ENCODE measurements at regions of chr7 and their contacts with region 1.

Region 1: GRCh38 chr7:158829342-158830210 is at the start of gene ESYT2:
- DNase-seq: peak; percentile 99
- ATAC-seq: peak; percentile 78
- H3K4me3 Mint-ChIP-seq: peak within 1 kb of the TSS; percentile 94
- H3K27ac Mint-ChIP-seq: peak within 1 kb of the TSS; percentile 85
- H3K4me1 Mint-ChIP-seq: peaks cover 34% of the 10 kb centered on the region
- H3K27me3 Mint-ChIP-seq: no peaks in the 10 kb centered on the region
- total RNA-seq, gene ESYT2: 68.5 to 73.7 TPM

Region 2: DNA sequence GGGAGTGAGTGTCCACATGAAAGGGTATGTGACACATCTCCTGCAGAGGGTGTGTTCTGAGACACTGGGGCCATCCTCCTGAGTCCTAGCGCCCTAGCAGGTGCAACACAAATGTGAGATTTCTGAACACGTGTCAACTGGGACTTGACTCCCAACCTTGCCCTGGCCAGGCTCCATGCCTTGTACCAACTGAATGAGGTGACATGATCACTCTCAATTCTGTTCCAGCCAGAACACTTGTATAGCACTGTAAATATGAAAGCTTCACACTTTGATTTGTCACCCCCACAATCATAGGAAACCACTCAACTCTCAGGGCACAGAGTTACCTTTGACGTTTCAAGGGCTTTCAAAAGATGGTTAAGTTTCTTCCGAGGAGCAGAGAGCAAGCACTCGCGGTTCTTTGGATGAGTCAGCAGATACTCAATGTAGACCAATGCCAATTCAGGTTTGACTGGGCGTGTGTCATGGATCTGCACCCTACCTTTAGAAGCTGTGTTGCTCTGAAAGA is 173.6 kb before region 1 on chr7:
- CTCF ChIA-PET with region 1: no interaction called
- POLR2A ChIA-PET with region 1: no interaction called
- intact Hi-C with region 1: loop called (anchors 1 to 5 kb)
- DNase-seq: peak; percentile 87
- ATAC-seq: peak; percentile 93
- H3K4me3 Mint-ChIP-seq: no peak overlapping the region
- H3K27ac Mint-ChIP-seq: peak overlapping the region; percentile 83
- H3K4me1 Mint-ChIP-seq: peaks cover 31% of the 10 kb centered on the region
- H3K27me3 Mint-ChIP-seq: no peaks in the 10 kb centered on the region

Region 3: GRCh38 chr7:158782761-158783401 is 46.7 kb before region 1 on chr7:
- CTCF ChIA-PET with region 1: no interaction called
- POLR2A ChIA-PET with region 1: no interaction called
- intact Hi-C with region 1: loop called (anchors 2 to 5 kb)
- DNase-seq: peak; percentile 34
- ATAC-seq: peak; percentile 49
- H3K4me3 Mint-ChIP-seq: no peak overlapping the region
- H3K27ac Mint-ChIP-seq: no peak overlapping the region
- H3K4me1 Mint-ChIP-seq: peaks cover 4% of the 10 kb centered on the region
- H3K27me3 Mint-ChIP-seq: no peaks in the 10 kb centered on the region

Region 4: DNA sequence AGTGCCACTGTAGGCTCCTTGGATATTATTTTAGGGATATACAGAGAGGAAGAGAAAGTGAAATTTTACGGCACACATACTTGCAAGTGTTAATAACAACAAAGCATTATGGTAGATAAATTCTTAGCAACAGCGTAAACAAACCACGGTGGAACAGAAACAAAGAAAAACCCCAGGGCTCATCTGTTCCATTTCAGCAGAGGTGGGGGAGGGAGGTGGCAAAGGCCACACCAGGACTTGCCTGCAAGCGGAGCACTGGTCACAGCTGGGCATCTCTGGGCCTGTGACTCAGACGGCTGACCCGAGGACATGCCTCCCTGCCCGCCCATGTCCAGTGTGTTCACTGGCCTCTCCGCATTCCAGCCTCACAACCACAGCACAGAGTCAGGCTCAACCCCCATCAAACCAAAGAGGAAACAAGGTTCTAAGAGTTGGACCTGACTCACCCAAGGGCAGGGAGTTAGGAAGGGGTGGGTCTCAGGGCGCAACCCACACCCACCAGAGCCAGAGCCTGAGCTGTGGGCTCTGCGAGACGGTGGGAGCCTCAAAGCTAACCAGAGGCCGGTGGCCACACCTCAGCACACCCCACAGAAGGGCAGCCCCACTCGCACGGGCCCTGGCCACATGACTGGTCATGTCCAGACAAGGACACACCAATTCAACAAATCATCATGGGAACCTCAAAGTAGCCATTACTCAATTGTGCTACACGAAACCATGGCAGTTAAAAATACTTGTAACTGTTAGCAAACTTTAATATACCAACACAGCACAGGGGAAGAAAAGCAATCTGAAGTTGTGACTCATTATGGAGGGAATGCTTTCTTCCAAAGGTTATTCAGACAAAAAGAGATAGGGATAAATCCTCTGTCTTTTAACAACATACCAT is 11.0 kb before region 1 on chr7:
- CTCF ChIA-PET with region 1: interaction called, 6 read pairs
- POLR2A ChIA-PET with region 1: interaction called, 6 read pairs
- intact Hi-C with region 1: loop called (anchors 1 kb)
- DNase-seq: peak; percentile 85
- ATAC-seq: peak; percentile 74
- H3K4me3 Mint-ChIP-seq: peak overlapping the region; percentile 73
- H3K27ac Mint-ChIP-seq: peak overlapping the region; percentile 93
- H3K4me1 Mint-ChIP-seq: peaks cover 87% of the 10 kb centered on the region
- H3K27me3 Mint-ChIP-seq: no peaks in the 10 kb centered on the region

Region 5: GRCh38 chr7:158856883-158857668 is 27.5 kb after region 1 on chr7:
- CTCF ChIA-PET with region 1: interaction called, 4 read pairs
- POLR2A ChIA-PET with region 1: interaction called, 10 read pairs
- intact Hi-C with region 1: loop called (anchors 1 kb)
- DNase-seq: no peak
- ATAC-seq: no peak
- H3K4me3 Mint-ChIP-seq: peak overlapping the region; percentile 92
- H3K27ac Mint-ChIP-seq: no peak overlapping the region
- H3K4me1 Mint-ChIP-seq: peaks cover 26% of the 10 kb centered on the region
- H3K27me3 Mint-ChIP-seq: no peaks in the 10 kb centered on the region

Region 6: GRCh38 chr7:158991824-158992583 is 162.4 kb after region 1 on chr7:
- CTCF ChIA-PET with region 1: no interaction called
- POLR2A ChIA-PET with region 1: no interaction called
- intact Hi-C with region 1: no loop called
- DNase-seq: peak; percentile 37
- ATAC-seq: peak; percentile 70
- H3K4me3 Mint-ChIP-seq: no peak overlapping the region
- H3K27ac Mint-ChIP-seq: no peak overlapping the region
- H3K4me1 Mint-ChIP-seq: peaks cover 16% of the 10 kb centered on the region
- H3K27me3 Mint-ChIP-seq: peaks cover 41% of the 10 kb centered on the region

Region 7: DNA sequence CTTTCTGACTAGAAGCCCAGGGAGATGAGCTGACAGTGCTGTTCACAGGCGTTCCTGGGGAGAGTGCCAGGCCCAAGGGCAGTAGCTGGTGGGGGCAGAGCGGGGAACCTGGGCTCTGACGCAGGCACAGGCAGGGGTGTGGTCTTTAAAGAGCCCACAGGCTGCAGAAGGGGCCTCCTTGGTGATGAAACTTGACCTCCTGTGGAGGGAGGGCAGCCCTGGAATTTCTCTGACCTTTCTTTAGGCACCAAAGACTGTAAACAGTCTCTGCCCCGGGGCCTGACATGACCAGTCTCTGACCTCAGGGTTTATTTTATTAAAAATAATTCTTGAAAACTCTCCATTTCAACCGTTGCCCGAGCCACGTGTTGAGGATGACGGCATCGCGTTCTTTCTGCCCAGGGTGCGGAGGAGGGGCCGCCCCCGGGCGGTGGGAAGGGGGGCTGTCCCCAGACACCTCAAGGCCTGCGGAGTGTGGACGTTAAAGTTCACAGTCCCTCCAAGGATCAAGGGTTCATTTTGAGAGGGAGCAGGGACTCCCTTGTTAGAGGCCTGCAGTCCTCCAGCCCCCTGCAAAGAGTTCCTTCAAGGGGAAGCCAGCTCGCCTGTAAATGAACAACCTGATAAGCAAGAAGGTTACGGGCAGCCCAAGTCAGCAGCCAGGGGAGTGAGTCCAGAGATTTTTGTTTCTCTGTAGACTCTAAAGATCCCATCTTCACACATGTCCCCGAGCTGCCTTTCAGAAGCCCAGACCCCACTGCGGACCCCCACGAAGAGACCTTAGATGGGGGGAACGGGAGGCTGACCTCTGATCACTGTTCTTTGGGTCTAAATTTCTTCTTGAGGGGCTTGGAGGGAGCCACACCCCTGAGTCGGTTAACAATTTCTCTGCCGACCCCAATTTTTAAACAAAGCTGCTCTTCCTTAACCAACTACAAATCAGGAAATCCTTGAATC is 186.2 kb after region 1 on chr7:
- CTCF ChIA-PET with region 1: no interaction called
- POLR2A ChIA-PET with region 1: no interaction called
- intact Hi-C with region 1: loop called in 1 of 2 experiments (anchors 5 kb)
- DNase-seq: no peak
- ATAC-seq: no peak
- H3K4me3 Mint-ChIP-seq: no peak overlapping the region
- H3K27ac Mint-ChIP-seq: no peak overlapping the region
- H3K4me1 Mint-ChIP-seq: peaks cover 30% of the 10 kb centered on the region
- H3K27me3 Mint-ChIP-seq: peaks cover 4% of the 10 kb centered on the region

Measured in activated CD4-positive, alpha-beta T cell treated with anti-CD3 and anti-CD28 coated beads for 36 hours (primary cell).